Activated CD8-positive, alpha-beta T cell treated with anti-CD3 and anti-CD28 coated beads for 36 hours (primary cell): ENCODE measurements at regions of chr1 and their contacts with region 1.

Region 1: GRCh38 chr1:33633019-33633801 is 160.8 kb downstream of the ZSCAN20 start:
- DNase-seq: peak; percentile 95
- ATAC-seq: peak; percentile 93
- H3K4me3 Mint-ChIP-seq: no peak overlapping the region
- H3K27ac Mint-ChIP-seq: no peak overlapping the region
- H3K4me1 Mint-ChIP-seq: no peaks in the 10 kb centered on the region
- H3K27me3 Mint-ChIP-seq: peaks cover 29% of the 10 kb centered on the region
- CTCF ChIP-seq: peak; percentile 97

Region 2: DNA sequence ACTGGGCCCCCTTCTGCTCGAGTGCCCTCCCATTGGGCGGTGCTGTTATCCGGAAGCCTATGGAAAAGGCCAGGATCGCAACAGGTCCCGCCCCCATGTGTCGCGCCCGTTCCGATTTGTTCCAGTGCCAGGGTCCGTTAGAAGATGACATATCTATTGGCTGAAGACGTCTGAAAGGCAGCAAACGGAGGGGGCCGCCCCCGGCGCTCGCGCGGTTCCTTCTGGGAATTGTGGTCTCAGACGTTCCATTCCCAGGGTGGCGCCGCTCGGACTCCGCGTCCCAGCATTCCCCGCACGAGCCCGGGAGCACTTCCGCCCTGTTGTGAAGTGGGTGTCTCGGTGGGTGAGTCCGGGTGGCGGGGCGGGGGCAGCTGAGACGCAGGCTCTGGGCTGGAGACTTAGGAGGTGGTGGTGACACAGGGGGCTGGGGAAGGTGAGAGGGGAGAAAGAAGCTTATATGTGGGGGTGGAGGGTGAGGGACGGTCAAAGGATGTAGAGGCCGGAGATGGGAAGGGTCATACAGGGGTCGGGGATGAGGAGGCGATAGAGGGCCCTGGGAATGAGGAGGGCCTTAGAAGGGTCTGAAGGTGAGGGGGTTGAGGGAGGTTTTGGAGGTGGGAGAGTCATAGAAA is 160.7 kb before region 1 on chr1 and contains the start of gene ZSCAN20:
- CTCF ChIA-PET with region 1: no interaction called
- POLR2A ChIA-PET with region 1: no interaction called
- intact Hi-C with region 1: no loop called
- DNase-seq: peak; percentile 96
- ATAC-seq: peak; percentile 95
- H3K4me3 Mint-ChIP-seq: peak within 1 kb of the TSS; percentile 72
- H3K27ac Mint-ChIP-seq: peak within 1 kb of the TSS; percentile 82
- H3K4me1 Mint-ChIP-seq: peaks cover 18% of the 10 kb centered on the region
- H3K27me3 Mint-ChIP-seq: no peaks in the 10 kb centered on the region
- CTCF ChIP-seq: no peak
- total RNA-seq, gene ZSCAN20: 2.6 to 3.2 TPM

Region 3: DNA sequence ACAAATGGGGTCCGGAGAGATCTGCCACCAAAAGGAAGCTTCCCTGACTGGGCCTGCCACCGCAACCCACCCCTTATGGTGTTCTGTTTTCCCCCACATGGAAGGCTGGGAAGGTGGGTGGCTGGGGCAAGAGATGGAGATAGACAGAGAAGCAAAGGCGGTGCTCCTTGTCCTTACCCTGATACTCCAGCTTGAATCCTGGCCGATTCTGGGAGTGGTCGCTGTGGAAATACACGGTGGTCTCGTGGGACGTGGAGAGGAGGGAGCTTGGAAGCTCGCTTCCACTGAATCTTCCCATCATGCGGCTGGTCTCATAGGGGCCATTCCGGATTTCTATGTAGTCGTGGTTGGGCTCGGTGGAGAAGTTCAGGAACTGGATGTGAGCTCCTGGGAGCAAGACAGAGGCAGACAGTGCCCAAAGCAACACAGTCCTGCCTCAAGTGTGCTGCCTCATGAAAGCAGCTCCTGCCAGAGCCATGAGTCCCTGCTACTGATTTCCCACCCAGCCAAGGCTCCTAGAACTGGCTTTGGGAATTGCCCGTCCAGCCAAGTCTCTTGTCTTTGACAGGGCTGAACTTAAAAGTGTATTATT is 22.2 kb before region 1 on chr1:
- CTCF ChIA-PET with region 1: interaction called, 11 read pairs
- POLR2A ChIA-PET with region 1: no interaction called
- intact Hi-C with region 1: no loop called
- DNase-seq: no peak
- ATAC-seq: no peak
- H3K4me3 Mint-ChIP-seq: no peak overlapping the region
- H3K27ac Mint-ChIP-seq: no peak overlapping the region
- H3K4me1 Mint-ChIP-seq: no peaks in the 10 kb centered on the region
- H3K27me3 Mint-ChIP-seq: peaks cover 14% of the 10 kb centered on the region
- CTCF ChIP-seq: no peak

Region 4: GRCh38 chr1:33654267-33654834 is 21.1 kb after region 1 on chr1:
- CTCF ChIA-PET with region 1: interaction called, 10 read pairs
- POLR2A ChIA-PET with region 1: no interaction called
- intact Hi-C with region 1: no loop called
- DNase-seq: no peak
- ATAC-seq: no peak
- H3K4me3 Mint-ChIP-seq: no peak overlapping the region
- H3K27ac Mint-ChIP-seq: no peak overlapping the region
- H3K4me1 Mint-ChIP-seq: no peaks in the 10 kb centered on the region
- H3K27me3 Mint-ChIP-seq: no peaks in the 10 kb centered on the region
- CTCF ChIP-seq: peak; percentile 26

Region 5: DNA sequence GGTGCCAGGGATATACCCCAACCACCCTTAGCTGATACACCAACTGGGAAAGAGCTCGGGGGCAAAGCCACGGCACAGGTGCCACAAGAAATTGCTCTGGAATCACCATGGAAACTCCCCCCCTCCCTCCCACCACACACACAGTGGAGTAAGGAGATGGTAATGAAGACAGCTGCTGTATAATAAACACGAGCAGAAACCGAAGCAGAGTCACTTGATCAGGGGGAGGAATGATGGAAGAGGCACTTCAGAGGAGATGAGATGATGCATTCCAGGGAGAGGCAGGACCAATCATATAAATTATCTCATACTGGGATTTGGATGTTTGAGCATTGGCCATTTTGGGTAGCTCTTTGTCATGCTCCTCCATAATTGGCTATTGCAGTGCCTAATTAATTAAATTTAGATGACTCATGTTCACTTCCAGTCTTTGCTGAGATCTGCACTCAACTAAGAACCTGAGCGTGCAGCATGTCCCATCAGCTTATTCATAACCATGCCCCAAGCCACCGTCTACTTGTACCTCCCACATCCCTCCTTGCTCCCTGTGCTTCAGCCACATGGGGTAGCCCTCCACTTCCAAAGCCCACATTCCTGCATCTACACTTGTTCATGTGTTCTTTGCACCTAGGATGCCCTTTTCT is 28.7 kb after region 1 on chr1:
- CTCF ChIA-PET with region 1: interaction called, 12 read pairs
- POLR2A ChIA-PET with region 1: no interaction called
- intact Hi-C with region 1: no loop called
- DNase-seq: no peak
- ATAC-seq: no peak
- H3K4me3 Mint-ChIP-seq: no peak overlapping the region
- H3K27ac Mint-ChIP-seq: no peak overlapping the region
- H3K4me1 Mint-ChIP-seq: no peaks in the 10 kb centered on the region
- H3K27me3 Mint-ChIP-seq: peaks cover 7% of the 10 kb centered on the region
- CTCF ChIP-seq: no peak

Region 6: GRCh38 chr1:33683913-33684312 is 50.7 kb after region 1 on chr1:
- CTCF ChIA-PET with region 1: no interaction called
- POLR2A ChIA-PET with region 1: no interaction called
- intact Hi-C with region 1: no loop called
- DNase-seq: no peak
- ATAC-seq: no peak
- H3K4me3 Mint-ChIP-seq: no peak overlapping the region
- H3K27ac Mint-ChIP-seq: no peak overlapping the region
- H3K4me1 Mint-ChIP-seq: no peaks in the 10 kb centered on the region
- H3K27me3 Mint-ChIP-seq: peaks cover 18% of the 10 kb centered on the region
- CTCF ChIP-seq: no peak